ENCODE measurements at regions of chr3 and their contacts with region 1.

Region 1: DNA sequence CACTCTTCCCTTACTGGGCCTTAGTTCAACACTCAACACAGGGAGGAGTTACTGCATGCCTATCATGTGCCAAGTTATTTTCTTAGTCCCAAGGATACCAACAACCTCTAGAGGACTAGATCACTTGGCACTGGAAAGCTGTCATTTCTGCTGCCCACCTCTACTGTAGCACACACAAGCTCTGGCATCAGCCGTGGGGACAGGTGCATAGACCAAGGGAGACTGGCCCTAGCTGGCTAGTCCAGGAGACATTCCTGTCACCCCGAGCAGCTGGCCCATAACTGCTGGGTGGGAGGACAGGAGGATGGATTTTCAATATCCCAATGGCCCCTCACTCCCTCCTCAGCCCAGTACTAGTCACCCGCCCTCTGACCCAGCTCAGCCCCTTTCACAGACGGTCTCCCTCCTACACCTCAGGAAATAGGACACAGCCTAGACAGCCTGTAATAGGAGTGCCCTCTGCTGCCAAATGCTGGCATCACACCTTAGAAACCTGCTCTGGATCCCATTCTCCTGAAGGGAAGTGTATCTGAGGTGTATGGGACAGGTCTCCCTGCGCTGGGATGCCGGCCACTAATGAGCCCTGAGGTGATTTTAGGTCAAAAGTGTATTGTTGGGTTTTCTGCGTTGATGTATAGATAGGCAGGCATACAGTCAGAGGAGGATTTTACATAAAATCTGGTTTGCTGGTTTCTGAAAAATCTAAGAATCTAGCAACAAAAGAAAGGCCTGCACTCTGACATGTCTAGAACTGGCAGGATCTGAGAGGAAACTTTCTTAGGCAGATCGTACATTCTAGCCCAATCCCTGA is 3.4 kb upstream of the DZIP1L start:
- DNase-seq: peak; percentile 87
- H3K4me3 Mint-ChIP-seq: no peak overlapping the region
- H3K27ac Mint-ChIP-seq: no peak overlapping the region
- H3K4me1 Mint-ChIP-seq: peaks cover 19% of the 10 kb centered on the region
- H3K27me3 Mint-ChIP-seq: no peaks in the 10 kb centered on the region
- CTCF ChIP-seq: peak; percentile 91

Region 2: DNA sequence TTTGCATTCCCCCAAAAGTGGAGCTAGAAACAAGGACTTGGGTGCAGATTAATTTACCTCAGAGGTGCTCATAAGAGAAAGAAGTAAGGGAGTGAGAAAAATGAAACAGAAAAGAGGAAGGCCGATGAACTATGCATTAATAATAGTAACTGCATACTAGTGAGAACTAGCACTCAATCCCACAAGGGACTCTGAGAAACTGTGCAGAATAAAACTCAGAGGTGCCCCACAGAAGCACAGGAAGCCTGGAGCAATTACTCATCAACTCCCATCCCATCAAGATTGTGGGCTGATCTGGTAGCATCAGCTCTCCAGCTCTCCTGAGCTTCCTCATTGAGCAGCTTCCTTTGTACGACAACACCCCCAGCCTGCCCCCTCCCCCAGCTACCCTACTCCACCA is 58.0 kb before region 1 on chr3:
- CTCF ChIA-PET with region 1: interaction called, 743 read pairs
- POLR2A ChIA-PET with region 1: no interaction called
- intact Hi-C with region 1: no loop called
- DNase-seq: no peak
- H3K4me3 Mint-ChIP-seq: no peak overlapping the region
- H3K27ac Mint-ChIP-seq: no peak overlapping the region
- H3K4me1 Mint-ChIP-seq: no peaks in the 10 kb centered on the region
- H3K27me3 Mint-ChIP-seq: no peaks in the 10 kb centered on the region
- CTCF ChIP-seq: no peak

Region 3: GRCh38 chr3:138082085-138082991 is 36.5 kb before region 1 on chr3:
- CTCF ChIA-PET with region 1: interaction called, 743 read pairs
- POLR2A ChIA-PET with region 1: interaction called, 39 read pairs
- intact Hi-C with region 1: loop called (anchors 2 kb)
- DNase-seq: peak; percentile 93
- H3K4me3 Mint-ChIP-seq: peak overlapping the region; percentile 63
- H3K27ac Mint-ChIP-seq: peak overlapping the region; percentile 90
- H3K4me1 Mint-ChIP-seq: peaks cover 50% of the 10 kb centered on the region
- H3K27me3 Mint-ChIP-seq: no peaks in the 10 kb centered on the region
- CTCF ChIP-seq: no peak

Region 4: GRCh38 chr3:138089091-138089490 is 29.7 kb before region 1 on chr3:
- CTCF ChIA-PET with region 1: interaction called, 743 read pairs
- POLR2A ChIA-PET with region 1: interaction called, 39 read pairs
- intact Hi-C with region 1: no loop called
- DNase-seq: peak; percentile 60
- H3K4me3 Mint-ChIP-seq: no peak overlapping the region
- H3K27ac Mint-ChIP-seq: peak overlapping the region; percentile 35
- H3K4me1 Mint-ChIP-seq: peaks cover 15% of the 10 kb centered on the region
- H3K27me3 Mint-ChIP-seq: no peaks in the 10 kb centered on the region
- CTCF ChIP-seq: no peak

Region 5: GRCh38 chr3:138108099-138108498 is 10.7 kb before region 1 on chr3:
- CTCF ChIA-PET with region 1: interaction called, 18 read pairs
- POLR2A ChIA-PET with region 1: interaction called, 4 read pairs
- intact Hi-C with region 1: no loop called
- DNase-seq: no peak
- H3K4me3 Mint-ChIP-seq: no peak overlapping the region
- H3K27ac Mint-ChIP-seq: no peak overlapping the region
- H3K4me1 Mint-ChIP-seq: peaks cover 4% of the 10 kb centered on the region
- H3K27me3 Mint-ChIP-seq: no peaks in the 10 kb centered on the region
- CTCF ChIP-seq: no peak